ENCODE measurements at regions of chr7 and their contacts with region 1.

Region 1: GRCh38 chr7:44847508-44847920 is 373 bp downstream of the H2AZ2 start:
- DNase-seq: peak; percentile 93
- ATAC-seq: peak; percentile 70
- H3K4me3 Mint-ChIP-seq: peak overlapping the region; percentile 95
- H3K27ac Mint-ChIP-seq: peak overlapping the region; percentile 97
- H3K4me1 Mint-ChIP-seq: peaks cover 38% of the 10 kb centered on the region
- H3K27me3 Mint-ChIP-seq: no peaks in the 10 kb centered on the region

Region 2: GRCh38 chr7:44490351-44491200 is 356.9 kb before region 1 on chr7 and contains the start of gene NUDCD3:
- CTCF ChIA-PET with region 1: no interaction called
- POLR2A ChIA-PET with region 1: no interaction called
- intact Hi-C with region 1: loop called in 1 of 2 experiments (anchors 1 kb)
- DNase-seq: peak; percentile 88
- ATAC-seq: peak; percentile 74
- H3K4me3 Mint-ChIP-seq: peak within 1 kb of the TSS; percentile 86
- H3K27ac Mint-ChIP-seq: peak within 1 kb of the TSS; percentile 100
- H3K4me1 Mint-ChIP-seq: peaks cover 42% of the 10 kb centered on the region
- H3K27me3 Mint-ChIP-seq: peaks cover 3% of the 10 kb centered on the region
- total RNA-seq, gene NUDCD3: 70.3 to 77.6 TPM

Region 3: DNA sequence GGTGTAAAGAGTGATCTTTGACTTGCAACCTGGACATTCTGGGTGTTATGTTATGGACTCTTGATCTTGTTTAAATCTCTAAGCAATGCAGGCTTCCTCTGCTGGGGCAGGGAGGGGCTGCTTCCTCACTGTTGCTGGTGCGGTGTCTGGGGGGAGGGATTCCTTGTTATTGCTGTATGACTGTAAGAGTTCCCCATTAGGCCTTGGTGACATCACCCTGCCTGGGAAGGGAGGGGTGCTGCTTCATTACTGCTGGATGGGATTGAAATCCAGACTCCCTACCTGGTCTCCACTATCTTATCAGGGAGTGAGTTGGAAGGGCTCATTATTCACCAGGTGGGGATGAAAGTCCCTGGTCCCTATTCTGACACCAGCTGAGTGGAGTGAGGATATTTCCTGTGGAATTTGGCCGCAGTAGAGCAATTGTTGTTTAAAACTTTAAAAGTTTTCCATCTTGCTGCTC is 232.3 kb before region 1 on chr7:
- CTCF ChIA-PET with region 1: interaction called, 3 read pairs
- POLR2A ChIA-PET with region 1: no interaction called
- intact Hi-C with region 1: loop called in 1 of 2 experiments (anchors 1 kb)
- DNase-seq: peak; percentile 43
- ATAC-seq: no peak
- H3K4me3 Mint-ChIP-seq: no peak overlapping the region
- H3K27ac Mint-ChIP-seq: peak overlapping the region; percentile 66
- H3K4me1 Mint-ChIP-seq: peaks cover 65% of the 10 kb centered on the region
- H3K27me3 Mint-ChIP-seq: no peaks in the 10 kb centered on the region

Region 4: DNA sequence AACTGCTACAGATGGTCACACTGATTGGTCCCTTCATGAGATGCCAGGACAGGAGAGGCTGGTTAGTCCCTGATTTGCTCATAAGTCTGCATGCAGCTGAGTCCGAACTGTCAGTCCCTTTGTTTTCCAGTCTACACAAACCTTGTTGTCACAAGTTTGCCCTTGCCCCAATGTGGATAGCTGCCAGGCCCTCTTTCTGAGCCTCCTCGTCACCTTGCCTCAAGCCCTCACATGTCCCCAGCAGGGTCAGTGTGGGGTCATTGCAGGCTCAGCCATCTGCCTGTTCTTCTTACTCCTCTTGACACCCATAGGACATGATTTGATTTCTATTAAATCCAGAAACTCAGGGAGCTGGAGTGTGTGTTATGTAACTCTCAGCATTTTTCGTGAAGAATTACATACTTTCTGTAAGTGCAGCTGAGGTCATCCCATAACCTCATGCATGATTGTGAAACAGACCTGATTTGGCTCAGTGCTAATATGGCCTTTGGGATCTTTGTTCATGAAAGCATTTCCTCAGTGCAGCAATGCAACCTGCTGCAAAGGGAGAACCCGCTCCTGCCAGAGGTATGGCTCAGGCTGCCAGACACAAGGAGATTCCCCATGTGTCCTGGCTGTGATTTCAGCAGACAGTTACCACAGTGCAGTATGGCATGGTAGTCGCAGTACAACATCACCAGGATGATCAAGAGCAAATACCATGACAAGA is 168.9 kb before region 1 on chr7:
- CTCF ChIA-PET with region 1: no interaction called
- POLR2A ChIA-PET with region 1: no interaction called
- intact Hi-C with region 1: no loop called
- DNase-seq: no peak
- ATAC-seq: no peak
- H3K4me3 Mint-ChIP-seq: no peak overlapping the region
- H3K27ac Mint-ChIP-seq: peak overlapping the region; percentile 63
- H3K4me1 Mint-ChIP-seq: no peaks in the 10 kb centered on the region
- H3K27me3 Mint-ChIP-seq: no peaks in the 10 kb centered on the region

Region 5: GRCh38 chr7:44858161-44858560 is 10.6 kb after region 1 on chr7:
- CTCF ChIA-PET with region 1: interaction called, 27 read pairs
- POLR2A ChIA-PET with region 1: interaction called, 3 read pairs
- intact Hi-C with region 1: loop called in 1 of 2 experiments (anchors 1 kb)
- DNase-seq: no peak
- ATAC-seq: no peak
- H3K4me3 Mint-ChIP-seq: no peak overlapping the region
- H3K27ac Mint-ChIP-seq: no peak overlapping the region
- H3K4me1 Mint-ChIP-seq: peaks cover 18% of the 10 kb centered on the region
- H3K27me3 Mint-ChIP-seq: no peaks in the 10 kb centered on the region

Region 6: GRCh38 chr7:44973610-44974401 is 126.3 kb after region 1 on chr7:
- CTCF ChIA-PET with region 1: interaction called, 15 read pairs
- POLR2A ChIA-PET with region 1: no interaction called
- intact Hi-C with region 1: no loop called
- DNase-seq: peak; percentile 74
- ATAC-seq: no peak
- H3K4me3 Mint-ChIP-seq: no peak overlapping the region
- H3K27ac Mint-ChIP-seq: peak overlapping the region; percentile 42
- H3K4me1 Mint-ChIP-seq: peaks cover 49% of the 10 kb centered on the region
- H3K27me3 Mint-ChIP-seq: no peaks in the 10 kb centered on the region

Region 7: DNA sequence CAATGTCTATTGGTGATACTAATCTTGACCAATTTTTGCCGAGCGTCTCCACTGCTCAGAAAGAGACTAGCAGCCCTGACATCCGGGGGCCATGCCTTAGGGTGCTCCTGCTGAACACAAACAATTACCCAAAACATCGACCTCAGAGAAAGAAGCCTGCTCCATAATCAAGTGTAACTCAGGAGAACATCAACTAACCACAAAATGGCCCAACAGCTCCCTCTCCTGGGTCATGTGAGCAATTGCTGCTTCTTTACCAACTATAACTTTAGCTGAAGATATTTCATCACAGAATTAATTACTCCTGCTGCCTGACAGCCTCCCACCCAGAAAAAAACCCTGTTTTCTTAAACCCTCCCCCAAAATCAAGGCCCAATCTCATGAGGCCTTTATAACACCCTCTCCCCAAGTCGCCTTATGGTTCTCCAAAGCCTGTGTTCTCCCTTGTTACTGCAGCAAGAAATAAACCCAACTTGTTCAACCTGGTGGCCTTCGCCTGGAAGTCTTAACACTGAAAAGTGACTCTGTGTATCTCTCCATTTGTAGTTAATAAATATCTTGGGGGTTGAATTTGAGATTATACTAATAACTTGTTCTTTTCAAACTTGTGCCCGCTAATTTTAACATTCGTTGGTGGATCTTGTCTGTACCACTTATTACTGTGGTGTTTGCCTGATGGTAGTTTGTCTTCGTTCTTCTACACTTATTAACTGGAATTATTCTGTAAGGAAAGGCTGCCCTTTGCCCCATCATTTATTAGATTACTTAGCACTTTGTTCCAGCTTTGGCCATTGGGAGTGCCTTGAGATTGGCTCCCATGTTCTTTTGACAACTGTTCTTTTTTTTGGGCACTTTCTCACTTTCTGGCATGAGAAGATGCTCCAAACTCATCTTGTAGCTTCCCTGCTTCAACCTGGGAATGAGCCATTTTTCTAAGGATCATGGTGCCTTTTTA is 288.9 kb after region 1 on chr7:
- CTCF ChIA-PET with region 1: interaction called, 7 read pairs
- POLR2A ChIA-PET with region 1: no interaction called
- intact Hi-C with region 1: loop called in 1 of 2 experiments (anchors 2 kb)
- DNase-seq: peak; percentile 82
- ATAC-seq: peak; percentile 91
- H3K4me3 Mint-ChIP-seq: no peak overlapping the region
- H3K27ac Mint-ChIP-seq: no peak overlapping the region
- H3K4me1 Mint-ChIP-seq: peaks cover 11% of the 10 kb centered on the region
- H3K27me3 Mint-ChIP-seq: no peaks in the 10 kb centered on the region